Aorta (tissue), 5 donors: ENCODE measurements at regions of chr16 and their contacts with region 1.

Region 1: GRCh38 chr16:15643048-15643945 is at the start of gene MARF1:
- DNase-seq: peak; percentile 100
- ATAC-seq: peak; percentile 99
- H3K4me3 ChIP-seq: peak within 1 kb of the TSS; percentile 63 to 98
- H3K27ac ChIP-seq: peak within 1 kb of the TSS; percentile 51 to 99
- H3K4me1 ChIP-seq: peaks cover 0 to 2% of the 10 kb centered on the region in 2 donors
- H3K27me3 ChIP-seq: no peaks in the 10 kb centered on the region
- total RNA-seq, gene MARF1: 73.5 to 92.8 TPM

Region 2: GRCh38 chr16:16191493-16192167 is 548.3 kb after region 1 on chr16:
- intact Hi-C with region 1: loop called in 1 of 2 experiments (anchors 5 kb)
- DNase-seq: no peak
- ATAC-seq: no peak
- H3K4me3 ChIP-seq: no peak overlapping the region
- H3K27ac ChIP-seq: no peak overlapping the region
- H3K4me1 ChIP-seq: no peaks in the 10 kb centered on the region
- H3K27me3 ChIP-seq: no peaks in the 10 kb centered on the region